SK-N-SH (cell line): ENCODE measurements at regions of chr6 and their contacts with region 1.

Region 1: DNA sequence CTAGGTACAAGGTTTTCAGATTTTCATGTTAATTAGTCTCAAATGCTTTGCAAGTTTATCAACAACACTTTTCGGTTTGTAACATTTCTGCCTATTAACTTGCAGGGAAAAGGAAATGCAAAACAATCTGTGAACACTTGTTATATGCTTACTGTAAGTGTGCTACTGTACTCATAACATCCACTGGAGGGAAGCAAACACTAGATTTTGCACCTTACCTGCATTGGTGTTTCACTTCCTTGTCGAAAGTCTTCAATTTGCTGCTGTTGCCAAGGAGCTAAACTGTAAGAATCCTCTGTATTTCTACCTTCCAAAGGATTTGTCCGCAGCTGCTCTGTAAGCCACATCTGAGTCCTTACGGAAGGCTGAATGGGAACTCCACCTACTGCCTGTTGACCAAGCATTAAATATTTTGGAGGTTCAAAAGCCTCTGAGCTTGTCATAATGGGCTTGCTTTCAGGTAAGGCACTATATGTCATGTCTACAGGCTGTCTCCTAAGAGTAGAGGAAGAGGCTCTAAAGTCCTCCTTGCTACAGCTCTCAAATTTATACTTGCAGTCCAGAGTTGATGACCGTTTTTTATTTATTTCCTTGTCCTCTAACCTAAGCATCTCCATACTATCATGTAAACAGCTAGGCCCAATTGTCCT is 17.3 kb downstream of the PLN start:
- DNase-seq: peak; percentile 17
- H3K4me3 ChIP-seq: no peak overlapping the region
- H3K27ac ChIP-seq: no peak overlapping the region
- H3K4me1 ChIP-seq: no peaks in the 10 kb centered on the region; a peak in 2 of 4 replicates
- H3K27me3 ChIP-seq: no peaks in the 10 kb centered on the region
- CTCF ChIP-seq: peak; percentile 45
- EP300 ChIP-seq: no peak
- RAD21 ChIP-seq: peak; percentile 77

Region 2: GRCh38 chr6:118551063-118552053 is 14.1 kb before region 1 on chr6:
- CTCF ChIA-PET with region 1: interaction called, 12 read pairs
- POLR2A ChIA-PET with region 1: no interaction called
- DNase-seq: peak; percentile 41
- H3K4me3 ChIP-seq: peak overlapping the region in 1 of 2 experiments; percentile 18; a peak in 1 of 4 replicates
- H3K27ac ChIP-seq: no peak overlapping the region
- H3K4me1 ChIP-seq: peaks cover 0 to 13% of the 10 kb centered on the region in 2 experiments; a peak in 2 of 4 replicates
- H3K27me3 ChIP-seq: no peaks in the 10 kb centered on the region
- CTCF ChIP-seq: peak; percentile 74
- EP300 ChIP-seq: no peak
- RAD21 ChIP-seq: peak; percentile 86

Region 3: GRCh38 chr6:118580585-118581419 is 15.4 kb after region 1 on chr6:
- CTCF ChIA-PET with region 1: interaction called, 14 read pairs
- POLR2A ChIA-PET with region 1: no interaction called
- DNase-seq: peak; percentile 49
- H3K4me3 ChIP-seq: peak overlapping the region in 1 of 2 experiments; percentile 38; a peak in 1 of 4 replicates
- H3K27ac ChIP-seq: no peak overlapping the region
- H3K4me1 ChIP-seq: no peaks in the 10 kb centered on the region
- H3K27me3 ChIP-seq: no peaks in the 10 kb centered on the region
- CTCF ChIP-seq: peak; percentile 63
- EP300 ChIP-seq: no peak
- RAD21 ChIP-seq: peak; percentile 80

Region 4: GRCh38 chr6:118800394-118801071 is 235.1 kb after region 1 on chr6:
- CTCF ChIA-PET with region 1: interaction called, 20 read pairs
- POLR2A ChIA-PET with region 1: no interaction called
- DNase-seq: peak; percentile 78
- H3K4me3 ChIP-seq: peak overlapping the region in 1 of 2 experiments; percentile 30; a peak in 2 of 4 replicates
- H3K27ac ChIP-seq: no peak overlapping the region
- H3K4me1 ChIP-seq: peaks cover 0 to 5% of the 10 kb centered on the region in 2 experiments; a peak in 2 of 4 replicates
- H3K27me3 ChIP-seq: no peaks in the 10 kb centered on the region
- CTCF ChIP-seq: peak; percentile 89
- EP300 ChIP-seq: no peak
- RAD21 ChIP-seq: peak; percentile 83